ENCODE measurements at regions of chr1 and their contacts with region 1.

Region 1: GRCh38 chr1:26321315-26322041 is 3.7 kb downstream of the CD52 start:
- DNase-seq: peak; percentile 87
- CTCF ChIP-seq: peak; percentile 96

Region 2: DNA sequence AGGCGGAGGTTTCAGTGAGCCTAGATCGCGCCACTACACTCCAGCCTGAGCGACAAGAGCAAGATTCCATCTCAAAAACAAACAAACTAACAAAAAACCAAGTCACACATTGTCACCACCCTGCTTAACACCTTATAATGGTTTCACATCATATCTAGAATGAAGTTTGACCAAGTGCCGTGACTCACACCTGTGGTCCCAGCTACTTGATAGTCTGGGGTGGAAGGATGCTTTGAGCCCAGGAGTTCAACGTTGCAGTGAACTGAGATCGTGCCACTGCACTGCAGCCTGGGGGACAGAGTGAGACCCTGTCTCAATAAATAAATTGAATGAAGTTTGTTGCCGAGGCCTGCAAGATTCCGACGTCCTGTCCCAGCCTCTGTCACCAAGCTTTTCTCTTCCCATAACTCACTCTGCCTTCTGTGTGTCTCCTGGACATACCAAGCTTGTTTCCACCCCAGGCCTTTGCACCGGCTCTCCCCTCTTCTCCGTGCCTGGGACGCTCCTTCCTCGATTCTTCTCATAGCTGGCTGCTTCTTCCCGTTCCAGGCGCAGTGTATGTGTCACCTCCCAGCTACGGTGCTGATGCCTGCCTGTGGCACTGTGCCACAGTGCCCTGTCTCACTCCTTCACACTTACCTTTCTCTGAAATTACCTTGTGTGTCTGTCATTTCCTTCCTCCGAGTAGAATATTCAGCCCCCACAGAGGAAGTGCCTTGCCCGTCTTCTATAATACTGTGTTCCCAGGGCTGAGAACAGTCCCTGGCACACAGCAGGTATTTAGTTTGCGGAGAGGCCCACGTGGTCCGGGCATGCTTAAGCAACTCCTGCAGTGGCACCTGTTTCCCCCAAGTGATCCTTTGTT is 525.3 kb before region 1 on chr1:
- CTCF ChIA-PET with region 1: no interaction called
- POLR2A ChIA-PET with region 1: no interaction called
- DNase-seq: no peak
- CTCF ChIP-seq: no peak

Region 3: GRCh38 chr1:26156005-26156703 is 165.3 kb before region 1 on chr1:
- CTCF ChIA-PET with region 1: no interaction called
- POLR2A ChIA-PET with region 1: no interaction called
- DNase-seq: peak; percentile 22
- CTCF ChIP-seq: no peak

Region 4: DNA sequence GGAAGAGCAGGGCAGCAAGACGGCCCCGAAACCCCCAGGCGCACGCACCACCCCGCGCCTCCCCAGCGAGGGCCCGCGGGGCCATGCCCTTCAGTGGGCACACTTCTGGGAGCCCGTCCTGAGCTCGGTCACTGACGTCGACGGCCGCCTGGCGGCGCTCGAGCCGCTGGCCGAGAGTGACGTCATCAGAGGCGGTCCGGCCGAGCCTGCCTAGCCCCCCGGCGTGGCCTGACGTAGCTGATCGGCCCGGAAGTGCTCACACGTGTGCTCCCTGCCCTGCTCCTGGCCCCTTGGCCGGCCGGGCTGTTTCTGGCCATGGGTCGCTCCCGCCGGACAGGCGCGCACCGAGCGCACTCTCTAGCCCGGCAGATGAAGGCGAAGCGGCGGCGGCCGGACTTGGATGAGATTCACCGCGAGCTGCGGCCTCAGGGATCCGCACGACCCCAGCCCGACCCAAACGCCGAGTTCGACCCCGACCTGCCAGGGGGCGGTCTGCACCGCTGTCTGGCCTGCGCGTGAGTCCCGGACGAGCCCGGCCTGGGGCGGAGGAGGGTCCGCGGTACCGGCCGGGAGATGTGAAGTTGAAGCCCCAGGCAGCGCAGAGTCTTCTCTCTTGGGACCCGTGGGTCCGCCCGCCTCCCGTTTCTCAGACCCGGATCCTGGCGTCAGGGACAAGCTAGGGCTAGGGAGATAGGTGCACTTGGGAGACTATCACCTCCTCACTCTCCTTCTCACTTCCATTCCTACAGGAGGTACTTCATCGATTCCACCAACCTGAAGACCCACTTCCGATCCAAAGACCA is 151.6 kb before region 1 on chr1 and contains the start of gene ZNF593:
- CTCF ChIA-PET with region 1: interaction called, 12 read pairs
- POLR2A ChIA-PET with region 1: no interaction called
- DNase-seq: peak; percentile 100
- CTCF ChIP-seq: peak; percentile 95

Region 5: DNA sequence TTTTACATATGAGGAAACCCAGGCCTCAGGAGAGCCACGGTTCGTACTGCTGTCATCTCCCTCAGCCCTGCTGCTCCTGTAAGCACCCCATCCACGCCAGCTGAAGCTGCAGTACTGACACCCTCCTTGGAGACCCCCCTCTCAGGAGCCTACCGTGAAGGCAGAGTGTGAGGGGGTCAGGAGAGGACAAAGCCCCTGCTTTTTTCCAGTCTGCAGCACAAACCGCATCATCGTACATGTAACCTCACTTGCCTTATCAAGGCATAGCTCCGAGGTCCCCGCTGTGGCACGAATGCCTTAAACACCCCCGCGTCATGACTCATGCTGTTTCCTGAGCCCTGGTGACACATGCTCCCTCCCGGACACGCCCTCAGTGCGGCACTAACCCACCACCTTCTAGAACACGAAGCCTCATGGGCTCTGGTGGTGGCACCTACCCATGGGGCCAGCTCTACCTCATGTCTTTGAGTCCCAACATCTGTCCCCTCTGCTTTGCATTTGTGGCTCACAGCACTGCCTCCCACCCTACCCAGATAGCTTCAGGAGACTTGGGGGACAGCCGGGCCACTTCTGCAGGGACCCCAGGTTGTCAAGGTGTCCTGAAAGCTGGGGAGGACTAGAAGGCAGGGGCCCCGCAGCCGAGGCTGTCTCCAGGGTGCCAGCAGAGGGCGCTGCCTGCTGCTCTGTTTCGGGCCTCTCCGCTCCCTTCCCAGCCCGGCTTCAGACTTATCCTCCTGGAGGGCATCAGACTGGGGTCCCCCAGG is 36.7 kb before region 1 on chr1:
- CTCF ChIA-PET with region 1: interaction called, 690 read pairs
- POLR2A ChIA-PET with region 1: interaction called, 13 read pairs
- DNase-seq: peak; percentile 80
- CTCF ChIP-seq: peak; percentile 89

Region 6: GRCh38 chr1:26306290-26307229 is 14.9 kb before region 1 on chr1 and contains the start of gene UBXN11:
- CTCF ChIA-PET with region 1: interaction called, 24 read pairs
- POLR2A ChIA-PET with region 1: interaction called, 8 read pairs
- DNase-seq: peak; percentile 98
- CTCF ChIP-seq: no peak

Region 7: GRCh38 chr1:26363549-26364448 is 42.3 kb after region 1 on chr1:
- CTCF ChIA-PET with region 1: interaction called, 22 read pairs
- POLR2A ChIA-PET with region 1: no interaction called
- DNase-seq: peak; percentile 87
- CTCF ChIP-seq: peak; percentile 97

Region 8: DNA sequence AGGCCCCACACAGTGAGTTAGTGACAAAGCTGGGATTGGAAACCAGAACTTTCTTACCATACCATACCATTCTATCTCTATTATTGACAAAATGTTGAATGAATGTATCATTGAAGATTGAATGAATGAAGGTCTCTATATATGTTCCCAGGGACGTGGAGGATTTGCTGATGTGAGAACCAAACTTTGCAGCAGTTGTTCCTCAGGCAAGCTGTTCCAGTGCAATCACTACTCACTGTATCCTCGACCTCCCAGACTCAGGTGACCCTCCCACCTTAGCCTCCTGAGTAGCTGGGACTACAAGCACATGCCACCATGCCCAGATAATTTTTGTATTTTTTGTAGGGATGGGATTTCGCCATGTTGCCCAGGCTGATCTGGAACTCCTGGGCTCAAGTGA is 77.6 kb after region 1 on chr1:
- CTCF ChIA-PET with region 1: no interaction called
- POLR2A ChIA-PET with region 1: no interaction called
- DNase-seq: no peak
- CTCF ChIP-seq: no peak

Region 9: GRCh38 chr1:26900001-26900814 is 578.7 kb after region 1 on chr1 and contains the start of gene GPATCH3:
- CTCF ChIA-PET with region 1: no interaction called
- POLR2A ChIA-PET with region 1: no interaction called
- DNase-seq: peak; percentile 92
- CTCF ChIP-seq: no peak